Naive thymus-derived CD4-positive, alpha-beta T cell (primary cell): ENCODE measurements at regions of chr4 and their contacts with region 1.

Region 1: DNA sequence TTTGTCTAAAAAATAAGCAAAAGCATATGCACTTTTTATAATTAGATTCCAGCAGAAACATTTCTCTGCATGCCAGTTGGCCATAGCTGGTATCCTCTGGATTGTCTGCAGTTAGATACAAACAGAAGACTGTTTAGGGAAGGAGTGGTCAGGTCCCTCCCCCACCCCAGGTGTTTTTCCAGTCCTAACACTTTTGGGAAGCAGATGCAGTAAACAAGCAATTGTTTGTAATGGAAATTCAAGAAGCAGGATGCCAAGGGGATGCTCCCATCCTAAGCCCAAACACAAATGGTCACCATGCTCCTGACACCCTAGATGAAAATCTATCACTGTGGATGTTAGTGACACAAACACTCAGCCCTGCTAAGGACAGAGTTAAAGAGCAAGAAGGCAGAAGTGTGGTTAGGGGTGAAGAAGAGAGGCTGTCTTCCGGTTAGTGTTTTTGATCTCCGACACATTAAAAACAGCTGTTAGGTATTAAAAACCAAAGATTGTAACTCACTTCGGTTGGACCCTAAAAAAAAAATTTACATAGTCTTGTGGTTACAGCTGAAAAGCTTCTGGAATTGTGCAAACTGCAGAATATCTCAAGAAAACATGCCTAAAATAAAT is 7.9 kb downstream of the LEF1 start:
- DNase-seq: peak in 6 of 9 donors; percentile 47 to 63 (median 51)
- ATAC-seq: peak; percentile 62
- H3K4me3 ChIP-seq: peak overlapping the region; percentile 77
- H3K4me3 Mint-ChIP-seq: peak overlapping the region; percentile 83 to 100 (median 97)
- H3K27ac ChIP-seq: peak overlapping the region; percentile 87
- H3K27ac Mint-ChIP-seq: peak overlapping the region; percentile 63 to 97 (median 92)
- H3K4me1 ChIP-seq: peaks cover 31 to 41% of the 10 kb centered on the region in 2 donors
- H3K4me1 Mint-ChIP-seq: peaks cover 12 to 70% (median 44%) of the 10 kb centered on the region in 7 donors
- H3K27me3 ChIP-seq: no peaks in the 10 kb centered on the region
- H3K27me3 Mint-ChIP-seq: peaks cover 0 to 4% (median 0%) of the 10 kb centered on the region in 5 donors

Region 2: DNA sequence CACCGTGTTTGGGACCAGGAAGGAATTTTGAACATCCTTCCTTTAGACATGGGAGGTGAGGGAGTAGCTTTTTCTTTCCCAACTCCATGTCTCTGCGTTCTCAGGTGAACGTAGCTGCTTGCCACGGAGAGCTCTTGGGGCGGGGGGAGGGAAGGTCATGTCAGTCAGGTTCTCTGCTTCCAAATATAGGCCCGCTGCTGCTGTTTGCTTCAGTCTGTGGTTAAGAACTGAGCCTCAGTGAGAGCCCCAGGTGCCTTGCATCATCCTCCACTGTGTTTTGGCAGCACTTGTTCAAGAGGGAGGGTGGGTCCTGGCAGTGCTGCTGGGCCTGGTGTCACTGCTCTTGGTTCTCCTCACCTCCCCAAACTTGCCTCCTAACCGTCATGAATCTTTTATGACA is 124.6 kb before region 1 on chr4:
- CTCF ChIA-PET with region 1: interaction called, 22 read pairs
- POLR2A ChIA-PET with region 1: interaction called, 120 read pairs
- intact Hi-C with region 1: no loop called
- DNase-seq: peak in 8 of 9 donors; percentile 43 to 93 (median 88)
- ATAC-seq: peak; percentile 99
- H3K4me3 ChIP-seq: peak overlapping the region; percentile 41
- H3K4me3 Mint-ChIP-seq: peak overlapping the region; percentile 73 to 87 (median 80)
- H3K27ac ChIP-seq: peak overlapping the region; percentile 78
- H3K27ac Mint-ChIP-seq: peak overlapping the region; percentile 90 to 100 (median 96)
- H3K4me1 ChIP-seq: peaks cover 0 to 55% of the 10 kb centered on the region in 2 donors
- H3K4me1 Mint-ChIP-seq: peaks cover 19 to 81% (median 66%) of the 10 kb centered on the region in 7 donors
- H3K27me3 ChIP-seq: no peaks in the 10 kb centered on the region
- H3K27me3 Mint-ChIP-seq: no peaks in the 10 kb centered on the region

Region 3: DNA sequence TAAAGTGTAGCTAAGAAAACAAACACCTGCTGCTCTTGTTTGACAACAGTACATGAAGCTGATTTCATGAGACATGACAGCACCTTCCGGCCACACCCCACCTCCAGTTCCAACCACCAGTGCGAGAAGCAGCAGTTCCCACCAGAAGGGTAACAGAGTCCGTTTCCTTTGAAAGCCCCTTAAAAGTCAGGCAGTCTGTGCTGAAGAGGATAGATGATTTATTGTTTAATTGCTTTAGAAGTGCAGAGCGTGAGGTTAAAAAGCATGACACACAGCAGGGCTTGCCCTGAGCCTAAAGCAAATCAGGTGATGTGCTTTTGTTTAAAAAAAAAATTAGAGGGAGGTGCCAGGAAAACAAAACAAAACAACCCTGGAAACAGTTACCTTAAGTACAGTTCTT is 88.5 kb before region 1 on chr4:
- CTCF ChIA-PET with region 1: no interaction called
- POLR2A ChIA-PET with region 1: interaction called, 10 read pairs
- intact Hi-C with region 1: loop called (anchors 1 to 2 kb)
- DNase-seq: peak in 7 of 9 donors; percentile 63 to 94 (median 80)
- ATAC-seq: peak; percentile 92
- H3K4me3 ChIP-seq: peak overlapping the region; percentile 0
- H3K4me3 Mint-ChIP-seq: peak overlapping the region; percentile 53 to 81 (median 74)
- H3K27ac ChIP-seq: peak overlapping the region; percentile 77
- H3K27ac Mint-ChIP-seq: peak overlapping the region; percentile 84 to 98 (median 94)
- H3K4me1 ChIP-seq: peaks cover 23 to 62% of the 10 kb centered on the region in 2 donors
- H3K4me1 Mint-ChIP-seq: peaks cover 32 to 95% (median 81%) of the 10 kb centered on the region in 7 donors
- H3K27me3 ChIP-seq: no peaks in the 10 kb centered on the region
- H3K27me3 Mint-ChIP-seq: no peaks in the 10 kb centered on the region

Region 4: GRCh38 chr4:108109997-108110416 is 50.8 kb before region 1 on chr4:
- CTCF ChIA-PET with region 1: interaction called, 4 read pairs
- POLR2A ChIA-PET with region 1: interaction called, 160 read pairs
- intact Hi-C with region 1: loop called (anchors 1 kb)
- DNase-seq: no peak
- ATAC-seq: no peak
- H3K4me3 ChIP-seq: peak overlapping the region; percentile 7
- H3K4me3 Mint-ChIP-seq: peak overlapping the region; percentile 69 to 89 (median 78)
- H3K27ac ChIP-seq: peak overlapping the region; percentile 80
- H3K27ac Mint-ChIP-seq: peak overlapping the region; percentile 84 to 98 (median 90)
- H3K4me1 ChIP-seq: peaks cover 72 to 98% of the 10 kb centered on the region in 2 donors
- H3K4me1 Mint-ChIP-seq: peaks cover 70 to 97% (median 95%) of the 10 kb centered on the region in 7 donors
- H3K27me3 ChIP-seq: no peaks in the 10 kb centered on the region
- H3K27me3 Mint-ChIP-seq: no peaks in the 10 kb centered on the region

Region 5: GRCh38 chr4:108135549-108136209 is 25.2 kb before region 1 on chr4:
- CTCF ChIA-PET with region 1: interaction called, 5 read pairs
- POLR2A ChIA-PET with region 1: interaction called, 31 read pairs
- intact Hi-C with region 1: loop called in 1 of 2 experiments (anchors 5 kb)
- DNase-seq: no peak
- ATAC-seq: peak; percentile 2
- H3K4me3 ChIP-seq: peak overlapping the region; percentile 27
- H3K4me3 Mint-ChIP-seq: peak overlapping the region; percentile 70 to 92 (median 82)
- H3K27ac ChIP-seq: peak overlapping the region; percentile 69
- H3K27ac Mint-ChIP-seq: peak overlapping the region; percentile 79 to 98 (median 90)
- H3K4me1 ChIP-seq: peaks cover 13 to 94% of the 10 kb centered on the region in 2 donors
- H3K4me1 Mint-ChIP-seq: peaks cover 57 to 99% (median 90%) of the 10 kb centered on the region in 7 donors
- H3K27me3 ChIP-seq: no peaks in the 10 kb centered on the region
- H3K27me3 Mint-ChIP-seq: no peaks in the 10 kb centered on the region

Region 6: GRCh38 chr4:108148316-108148715 is 12.5 kb before region 1 on chr4:
- CTCF ChIA-PET with region 1: interaction called, 6 read pairs
- POLR2A ChIA-PET with region 1: interaction called, 94 read pairs
- intact Hi-C with region 1: loop called (anchors 1 to 2 kb)
- DNase-seq: peak in 5 of 9 donors; percentile 44 to 82 (median 47)
- ATAC-seq: peak; percentile 74
- H3K4me3 ChIP-seq: peak overlapping the region; percentile 32
- H3K4me3 Mint-ChIP-seq: peak overlapping the region; percentile 41 to 86 (median 80)
- H3K27ac ChIP-seq: peak overlapping the region; percentile 81
- H3K27ac Mint-ChIP-seq: peak overlapping the region; percentile 36 to 97 (median 92)
- H3K4me1 ChIP-seq: peaks cover 25 to 91% of the 10 kb centered on the region in 2 donors
- H3K4me1 Mint-ChIP-seq: peaks cover 56 to 94% (median 93%) of the 10 kb centered on the region in 7 donors
- H3K27me3 ChIP-seq: no peaks in the 10 kb centered on the region
- H3K27me3 Mint-ChIP-seq: no peaks in the 10 kb centered on the region